ENCODE measurements at regions of chr17 and their contacts with region 1.

Region 1: DNA sequence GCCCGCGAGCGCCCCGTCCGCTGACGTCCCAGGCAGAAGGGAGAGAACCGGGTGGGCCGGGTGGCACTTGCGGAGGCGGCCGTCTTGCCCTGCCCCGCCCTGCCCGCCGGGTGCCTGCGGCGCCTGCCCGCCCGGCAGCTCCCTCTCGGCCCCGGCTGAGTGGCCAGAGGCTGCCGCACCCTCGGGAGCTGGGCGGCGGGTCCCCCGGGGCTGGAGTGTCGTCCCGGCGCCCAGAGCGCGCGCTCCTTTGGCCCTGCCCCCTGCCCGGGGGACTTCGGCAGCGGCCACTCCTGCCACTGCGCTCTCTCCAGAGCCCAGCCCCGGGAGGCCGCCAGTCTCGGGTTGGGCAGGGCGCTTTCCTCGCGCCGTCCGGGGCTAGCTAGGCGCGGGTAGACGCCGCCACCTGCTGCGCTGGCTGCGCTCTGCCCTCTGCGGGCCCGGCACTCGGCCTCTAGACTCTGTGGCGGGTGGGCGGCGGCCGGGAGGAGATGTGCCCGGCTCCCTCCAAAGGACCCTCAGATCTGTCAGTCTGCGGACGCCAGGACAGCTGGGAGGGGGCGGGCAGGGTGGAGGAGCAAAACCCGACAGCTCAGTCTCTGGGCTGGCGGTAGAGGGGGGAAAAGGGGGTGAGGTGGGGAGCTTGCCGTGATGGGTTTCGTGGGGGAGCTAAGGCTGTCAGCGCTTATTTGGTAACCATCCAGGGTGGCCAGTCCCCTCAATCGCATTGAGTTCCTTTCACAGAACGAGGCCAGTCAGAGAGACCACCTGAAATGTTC is at the start of gene ST6GALNAC2:
- DNase-seq: peak; percentile 58 to 73
- ATAC-seq: peak; percentile 78 to 84
- H3K4me3 ChIP-seq: peak within 1 kb of the TSS; percentile 64 to 87 (median 78)
- H3K27ac ChIP-seq: peak within 1 kb of the TSS; percentile 61 to 84 (median 72)
- H3K4me1 ChIP-seq: peaks cover 6 to 14% of the 10 kb centered on the region in 2 donors
- H3K27me3 ChIP-seq: peaks cover 0 to 3% (median 0%) of the 10 kb centered on the region in 3 donors
- CTCF ChIP-seq: peak; percentile 67 to 79 (median 75)
- POLR2A ChIP-seq: peak; percentile 58 to 62
- total RNA-seq, gene ST6GALNAC2: 13.6 to 31.1 (median 27.4) TPM

Region 2: GRCh38 chr17:76565728-76566612 is 20.0 kb before region 1 on chr17:
- in situ Hi-C with region 1: no loop called
- intact Hi-C with region 1: loop called (anchors 2 kb)
- DNase-seq: no peak
- ATAC-seq: no peak
- H3K4me3 ChIP-seq: no peak overlapping the region
- H3K27ac ChIP-seq: no peak overlapping the region
- H3K4me1 ChIP-seq: peaks cover 36 to 48% of the 10 kb centered on the region in 2 donors
- H3K27me3 ChIP-seq: no peaks in the 10 kb centered on the region
- CTCF ChIP-seq: no peak
- POLR2A ChIP-seq: no peak